Heart right ventricle (tissue), 16 donors: ENCODE measurements at regions of chr16 and their contacts with region 1.

Region 1: DNA sequence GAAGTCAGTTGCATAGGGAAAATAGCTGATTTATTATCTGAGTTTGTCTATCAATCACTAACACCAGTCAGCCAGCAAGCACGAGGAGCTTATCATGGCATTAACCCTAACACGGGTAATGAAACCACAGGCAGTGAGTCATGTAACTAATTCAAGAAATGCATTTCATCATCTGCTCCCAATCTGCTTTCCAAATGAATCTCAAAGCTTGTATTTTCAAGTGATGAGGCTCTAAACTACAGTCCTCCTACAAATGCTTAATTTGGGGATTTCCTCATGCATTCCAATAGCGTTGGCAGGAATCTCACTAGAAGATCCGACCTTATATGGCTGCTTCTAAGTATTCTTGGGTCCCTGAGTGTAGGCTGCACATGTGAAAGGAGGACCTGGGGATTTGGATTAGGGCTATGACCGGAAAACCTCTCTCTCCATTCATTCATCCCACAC is 118.4 kb upstream of the HSBP1 start:
- DNase-seq: peak in 1 of 2 donors; percentile 14
- ATAC-seq: peak; percentile 67 to 86 (median 80)
- H3K4me3 ChIP-seq: no peak overlapping the region
- H3K27ac ChIP-seq: peak overlapping the region in 7 of 10 donors; percentile 9 to 76 (median 61)
- H3K4me1 ChIP-seq: peaks cover 0 to 32% (median 15%) of the 10 kb centered on the region in 9 donors
- H3K27me3 ChIP-seq: no peaks in the 10 kb centered on the region
- CTCF ChIP-seq: no peak

Region 2: GRCh38 chr16:83619381-83620150 is 69.8 kb before region 1 on chr16:
- intact Hi-C with region 1: loop called in 1 of 10 experiments (anchors 10 kb)
- DNase-seq: no peak
- ATAC-seq: no peak
- H3K4me3 ChIP-seq: no peak overlapping the region
- H3K27ac ChIP-seq: no peak overlapping the region
- H3K4me1 ChIP-seq: no peaks in the 10 kb centered on the region
- H3K27me3 ChIP-seq: no peaks in the 10 kb centered on the region
- CTCF ChIP-seq: no peak

Region 3: DNA sequence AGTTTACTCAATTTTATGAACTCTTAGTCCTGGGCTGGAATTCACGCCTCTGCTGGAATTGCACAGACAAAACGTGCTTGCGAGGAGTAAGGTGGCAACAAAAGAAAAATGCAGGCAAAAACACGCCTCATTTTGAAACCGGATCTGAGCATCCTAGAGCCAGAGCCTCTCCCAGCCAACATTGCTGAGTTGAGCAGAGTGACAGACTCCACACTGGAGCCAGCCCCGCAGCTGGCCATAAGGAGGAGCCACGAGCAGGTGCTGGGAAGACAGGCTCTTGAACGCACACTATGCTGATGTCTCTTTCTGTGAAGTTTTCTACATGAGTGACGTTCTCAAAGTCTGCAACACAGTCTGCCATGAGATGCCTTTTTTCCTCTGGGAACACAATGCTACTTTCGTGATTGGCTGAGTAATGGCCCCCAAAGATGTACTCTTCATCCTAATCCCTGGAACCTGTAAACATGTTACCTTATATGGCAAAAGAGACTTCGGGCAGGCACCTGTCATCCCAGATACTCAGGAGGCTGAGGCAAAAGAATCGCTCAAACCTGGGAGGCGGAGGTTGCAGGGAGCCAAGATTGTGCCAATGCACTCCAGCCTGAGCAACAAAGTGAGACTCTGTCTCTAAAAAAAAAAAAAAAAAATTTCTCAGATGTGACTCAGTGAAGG is 103.9 kb after region 1 on chr16:
- intact Hi-C with region 1: no loop called
- DNase-seq: no peak
- ATAC-seq: no peak
- H3K4me3 ChIP-seq: no peak overlapping the region
- H3K27ac ChIP-seq: no peak overlapping the region
- H3K4me1 ChIP-seq: no peaks in the 10 kb centered on the region
- H3K27me3 ChIP-seq: no peaks in the 10 kb centered on the region
- CTCF ChIP-seq: no peak